A549 (cell line): ENCODE measurements at regions of chr5 and their contacts with region 1.

Region 1: DNA sequence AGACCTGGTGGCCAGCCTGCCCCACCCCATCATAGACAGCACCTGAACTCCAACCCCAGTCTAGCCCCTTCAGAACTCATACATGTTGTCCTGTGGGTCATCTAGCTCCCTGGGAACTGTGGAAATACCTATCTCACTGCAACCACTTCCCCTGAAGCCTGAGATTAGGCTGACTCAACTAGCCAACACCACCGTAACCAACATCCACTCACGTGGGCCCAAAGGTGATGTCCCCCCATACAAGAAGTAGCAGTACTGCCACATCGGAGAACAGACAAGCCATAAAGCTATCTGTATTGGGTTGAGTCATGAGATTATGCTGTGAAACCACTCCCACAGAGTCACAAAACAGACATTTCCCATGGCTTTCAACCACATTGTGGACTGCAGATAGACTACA is 46.6 kb downstream of the OSMR start:
- DNase-seq: no peak
- ATAC-seq: no peak
- H3K4me3 ChIP-seq: no peak overlapping the region
- H3K27ac ChIP-seq: no peak overlapping the region
- H3K4me1 ChIP-seq: no peaks in the 10 kb centered on the region
- CTCF ChIP-seq: no peak
- EP300 ChIP-seq: no peak
- POLR2A ChIP-seq: no peak
- RAD21 ChIP-seq: no peak

Region 2: DNA sequence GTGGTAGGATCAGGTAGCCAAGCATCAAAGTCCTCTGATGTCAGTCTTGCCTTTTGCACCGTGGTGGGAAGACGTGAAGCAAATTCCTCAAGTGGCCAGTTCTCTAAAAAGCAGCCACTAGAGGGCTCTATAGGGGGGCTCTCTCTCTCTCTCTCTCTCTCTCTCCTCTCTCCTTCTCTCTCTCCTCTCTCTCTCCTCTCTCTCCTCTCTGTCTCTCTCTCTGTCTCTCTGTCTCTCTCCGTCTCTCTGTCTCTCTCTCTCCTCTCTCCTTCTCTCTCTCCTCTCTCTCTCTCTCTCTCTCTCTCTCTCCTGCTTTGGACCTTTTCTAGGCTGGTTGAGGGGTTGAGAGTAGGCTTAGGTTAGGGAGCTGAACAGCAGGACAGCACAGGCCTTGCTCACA is 60.5 kb before region 1 on chr5:
- CTCF ChIA-PET with region 1: interaction called, 13 read pairs
- POLR2A ChIA-PET with region 1: no interaction called
- DNase-seq: peak in 1 of 2 experiments; percentile 66
- ATAC-seq: peak; percentile 52 to 78; a peak in 3 of 6 replicates
- H3K4me3 ChIP-seq: no peak overlapping the region
- H3K27ac ChIP-seq: 0 out of 6 replicates have a peak overlapping the region, but pooled peaks of 1 of the 2 experiments have one; percentile 11
- H3K4me1 ChIP-seq: peaks cover 19% of the 10 kb centered on the region; the same call in 2 of the 3 replicates
- CTCF ChIP-seq: peak; percentile 50
- EP300 ChIP-seq: no peak
- POLR2A ChIP-seq: no peak
- RAD21 ChIP-seq: peak; percentile 31 to 48; a peak in 3 of 5 replicates